Astrocyte of the cerebellum (primary cell): ENCODE measurements at regions of chr2 and their contacts with region 1.

Region 1: GRCh38 chr2:67840460-67841068 is 222.2 kb downstream of the C1D start:
- DNase-seq: peak; percentile 51
- H3K4me3 ChIP-seq: no peak overlapping the region
- CTCF ChIP-seq: peak; percentile 93

Region 2: DNA sequence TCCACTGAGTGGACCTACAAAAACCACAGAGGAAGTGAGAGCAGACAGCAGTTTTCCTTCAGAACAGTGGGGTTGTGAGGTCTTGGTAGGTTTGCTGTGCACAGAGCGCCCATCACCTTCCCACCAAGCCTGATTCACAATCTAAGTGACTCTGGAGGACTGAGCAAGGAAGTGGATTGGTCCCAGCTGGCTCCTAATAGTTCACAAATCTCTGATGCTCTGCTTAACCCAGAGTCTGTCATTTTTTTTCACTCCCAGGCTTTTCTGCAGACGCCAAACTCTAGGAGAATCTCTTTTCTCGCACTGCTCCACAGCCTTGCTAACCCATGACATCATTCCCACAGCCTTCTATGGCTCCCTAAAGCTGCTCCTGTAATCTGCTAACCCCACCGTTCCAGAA is 58.1 kb before region 1 on chr2:
- in situ Hi-C with region 1: no loop called
- DNase-seq: no peak
- H3K4me3 ChIP-seq: no peak overlapping the region
- CTCF ChIP-seq: no peak

Region 3: GRCh38 chr2:67797801-67798540 is 42.6 kb before region 1 on chr2:
- in situ Hi-C with region 1: loop called (anchors 10 kb)
- DNase-seq: peak; percentile 36
- H3K4me3 ChIP-seq: no peak overlapping the region
- CTCF ChIP-seq: no peak

Region 4: DNA sequence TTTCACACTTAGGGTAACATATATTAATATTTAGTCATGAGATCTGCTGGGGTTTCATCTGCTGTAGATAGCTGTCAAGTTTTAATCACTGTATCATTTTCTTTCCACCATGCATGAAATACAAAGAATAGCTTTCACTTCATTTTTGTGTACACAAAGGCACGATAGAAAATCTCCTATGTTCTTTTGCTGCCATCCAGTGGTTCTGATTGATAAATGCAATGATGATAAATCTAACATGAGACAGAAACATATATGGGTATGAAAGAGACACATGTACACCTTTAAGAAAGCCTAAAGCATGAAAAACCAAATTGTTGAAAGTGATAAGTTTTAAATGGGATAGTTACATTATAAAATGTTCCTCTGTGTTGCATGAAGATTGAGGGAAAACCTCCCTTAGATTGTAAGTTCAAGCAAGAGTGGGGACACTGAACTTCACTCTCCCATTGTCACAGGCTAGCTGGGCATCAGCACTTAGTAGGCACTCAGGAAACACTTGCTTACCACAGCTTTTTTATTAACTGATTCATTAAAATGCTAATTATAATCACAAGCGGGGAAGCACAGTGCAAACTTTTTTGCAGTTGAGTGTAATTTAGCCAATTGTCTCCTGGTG is 191.1 kb after region 1 on chr2:
- in situ Hi-C with region 1: loop called (anchors 5 kb)
- DNase-seq: peak; percentile 59
- H3K4me3 ChIP-seq: no peak overlapping the region
- CTCF ChIP-seq: peak; percentile 33